ENCODE measurements at regions of chr4 and their contacts with region 1.

Region 1: DNA sequence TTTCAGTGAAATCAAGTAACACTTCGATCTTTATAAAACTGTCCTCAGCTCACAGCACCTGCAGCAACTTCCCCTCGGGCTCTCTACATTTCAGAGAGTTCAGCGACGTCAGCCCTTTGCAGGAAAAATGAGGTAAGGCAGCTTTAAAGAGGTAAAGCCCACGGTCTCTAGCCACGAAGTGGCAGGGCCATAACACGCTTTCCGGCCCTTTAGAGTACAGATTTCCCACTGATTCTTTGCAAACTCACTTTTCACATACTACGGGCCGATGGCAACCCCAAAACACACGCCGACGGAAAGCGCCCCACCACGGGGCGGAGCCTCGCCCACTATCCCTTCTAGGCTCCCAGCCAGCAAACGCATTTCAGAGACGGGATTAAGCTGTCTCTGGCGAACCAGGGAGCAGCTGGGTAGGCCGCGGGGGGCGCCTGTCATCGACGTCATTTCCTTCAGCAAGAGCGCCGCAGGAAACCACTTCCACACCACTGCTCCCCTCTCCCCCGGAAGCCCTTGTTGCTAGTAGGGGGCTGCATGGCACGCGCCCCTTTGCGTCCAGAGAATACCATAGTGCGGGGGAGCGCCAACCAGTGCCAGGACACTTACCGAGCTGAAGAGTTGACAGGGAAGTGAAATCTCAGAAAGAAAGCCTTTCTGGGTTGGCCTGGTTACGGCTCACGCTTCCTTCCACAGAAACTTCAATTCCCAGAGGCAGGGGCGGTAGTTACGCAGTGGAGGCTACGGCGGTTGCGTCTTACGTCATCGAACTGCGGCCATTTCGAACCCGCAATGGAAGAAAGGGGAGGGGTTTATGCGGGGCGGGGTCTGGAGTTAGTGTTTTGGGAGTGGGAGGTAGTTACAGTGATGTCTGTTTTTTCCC is at the start of gene TRMT10A:
- DNase-seq: peak; percentile 79 to 98 (median 98)
- ATAC-seq: peak; percentile 91
- H3K4me3 ChIP-seq: peak within 1 kb of the TSS; percentile 92
- H3K4me3 Mint-ChIP-seq: peak within 1 kb of the TSS; percentile 77 to 99 (median 98)
- H3K27ac ChIP-seq: peak within 1 kb of the TSS; percentile 91
- H3K27ac Mint-ChIP-seq: peak within 1 kb of the TSS; percentile 98 to 100 (median 100)
- H3K4me1 ChIP-seq: no peaks in the 10 kb centered on the region
- H3K4me1 Mint-ChIP-seq: peaks cover 0 to 33% (median 28%) of the 10 kb centered on the region in 7 donors
- H3K27me3 ChIP-seq: no peaks in the 10 kb centered on the region
- H3K27me3 Mint-ChIP-seq: peaks cover 13 to 29% (median 23%) of the 10 kb centered on the region in 5 donors
- total RNA-seq, gene TRMT10A: 3.9 to 9.1 (median 7.7) TPM

Region 2: DNA sequence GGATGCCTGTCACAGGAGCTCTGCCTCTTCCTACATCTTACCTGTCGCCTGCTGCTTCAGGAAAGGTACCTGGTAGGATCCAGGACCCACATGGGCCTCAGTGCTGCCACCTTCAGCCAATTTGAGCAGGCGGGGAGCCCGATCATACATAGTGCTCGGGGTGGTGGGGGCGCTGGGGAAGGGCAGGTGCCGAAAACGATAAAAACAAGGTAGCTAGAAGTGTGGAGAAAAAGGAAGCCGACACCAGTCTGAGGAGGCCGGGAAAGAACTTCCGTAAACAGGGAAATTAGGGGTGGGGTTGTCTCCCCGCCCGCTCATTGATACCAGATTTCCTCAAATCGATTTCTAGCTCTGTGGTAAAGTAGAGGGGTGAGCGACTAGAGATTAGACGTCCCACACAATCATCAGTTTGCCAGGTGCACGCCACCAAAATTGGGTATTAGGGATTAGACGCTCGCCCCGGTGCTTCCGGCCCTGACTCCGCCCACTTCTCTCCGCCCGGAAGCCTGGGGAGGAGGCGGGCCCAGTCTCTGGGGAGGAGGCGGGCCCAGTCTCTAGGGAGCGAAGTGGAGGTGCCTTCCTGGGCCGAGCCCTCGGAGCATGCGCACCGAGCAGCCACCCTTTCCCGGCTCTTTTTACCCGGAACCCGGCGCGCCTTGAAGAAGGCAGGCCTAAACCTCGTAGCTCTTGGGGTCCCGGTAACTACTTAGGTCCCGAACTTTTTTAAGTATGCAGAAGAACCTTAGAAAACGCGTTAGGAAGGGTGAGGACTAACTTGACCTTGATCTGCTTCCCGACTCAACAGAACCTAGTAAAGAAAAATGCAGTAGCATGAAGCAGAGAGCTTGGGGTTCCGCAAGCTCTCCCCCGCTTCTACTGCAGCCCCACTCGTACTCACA is 1420.3 kb before region 1 on chr4 and contains the start of gene STPG2:
- CTCF ChIA-PET with region 1: interaction called, 5 read pairs
- POLR2A ChIA-PET with region 1: interaction called, 4 read pairs
- intact Hi-C with region 1: loop called (anchors 1 kb)
- DNase-seq: peak; percentile 85 to 93 (median 91)
- ATAC-seq: peak; percentile 100
- H3K4me3 ChIP-seq: peak within 1 kb of the TSS; percentile 85
- H3K4me3 Mint-ChIP-seq: peak within 1 kb of the TSS; percentile 87 to 99 (median 94)
- H3K27ac ChIP-seq: peak within 1 kb of the TSS; percentile 84
- H3K27ac Mint-ChIP-seq: peak within 1 kb of the TSS; percentile 96 to 99 (median 98)
- H3K4me1 ChIP-seq: peaks cover 6 to 10% of the 10 kb centered on the region in 2 donors
- H3K4me1 Mint-ChIP-seq: peaks cover 12 to 28% (median 24%) of the 10 kb centered on the region in 7 donors
- H3K27me3 ChIP-seq: no peaks in the 10 kb centered on the region
- H3K27me3 Mint-ChIP-seq: peaks cover 0 to 16% (median 0%) of the 10 kb centered on the region in 5 donors
- total RNA-seq, gene STPG2: 0.19 to 0.47 (median 0.30) TPM in 4 of 5 experiments, not detected in the other

Region 3: GRCh38 chr4:99088481-99089365 is 474.8 kb before region 1 on chr4 and contains the start of gene ADH5:
- CTCF ChIA-PET with region 1: no interaction called
- POLR2A ChIA-PET with region 1: interaction called, 10 read pairs
- intact Hi-C with region 1: loop called (anchors 1 kb)
- DNase-seq: peak; percentile 75 to 90 (median 85)
- ATAC-seq: peak; percentile 98
- H3K4me3 ChIP-seq: peak within 1 kb of the TSS; percentile 98
- H3K4me3 Mint-ChIP-seq: peak within 1 kb of the TSS; percentile 93 to 99 (median 98)
- H3K27ac ChIP-seq: peak within 1 kb of the TSS; percentile 85
- H3K27ac Mint-ChIP-seq: peak within 1 kb of the TSS; percentile 94 to 99 (median 98)
- H3K4me1 ChIP-seq: peaks cover 8 to 9% of the 10 kb centered on the region in 2 donors
- H3K4me1 Mint-ChIP-seq: peaks cover 28 to 67% (median 57%) of the 10 kb centered on the region in 7 donors
- H3K27me3 ChIP-seq: no peaks in the 10 kb centered on the region
- H3K27me3 Mint-ChIP-seq: peaks cover 0 to 11% (median 0%) of the 10 kb centered on the region in 5 donors
- total RNA-seq, gene ADH5: 42.7 to 102 (median 74.0) TPM

Region 4: DNA sequence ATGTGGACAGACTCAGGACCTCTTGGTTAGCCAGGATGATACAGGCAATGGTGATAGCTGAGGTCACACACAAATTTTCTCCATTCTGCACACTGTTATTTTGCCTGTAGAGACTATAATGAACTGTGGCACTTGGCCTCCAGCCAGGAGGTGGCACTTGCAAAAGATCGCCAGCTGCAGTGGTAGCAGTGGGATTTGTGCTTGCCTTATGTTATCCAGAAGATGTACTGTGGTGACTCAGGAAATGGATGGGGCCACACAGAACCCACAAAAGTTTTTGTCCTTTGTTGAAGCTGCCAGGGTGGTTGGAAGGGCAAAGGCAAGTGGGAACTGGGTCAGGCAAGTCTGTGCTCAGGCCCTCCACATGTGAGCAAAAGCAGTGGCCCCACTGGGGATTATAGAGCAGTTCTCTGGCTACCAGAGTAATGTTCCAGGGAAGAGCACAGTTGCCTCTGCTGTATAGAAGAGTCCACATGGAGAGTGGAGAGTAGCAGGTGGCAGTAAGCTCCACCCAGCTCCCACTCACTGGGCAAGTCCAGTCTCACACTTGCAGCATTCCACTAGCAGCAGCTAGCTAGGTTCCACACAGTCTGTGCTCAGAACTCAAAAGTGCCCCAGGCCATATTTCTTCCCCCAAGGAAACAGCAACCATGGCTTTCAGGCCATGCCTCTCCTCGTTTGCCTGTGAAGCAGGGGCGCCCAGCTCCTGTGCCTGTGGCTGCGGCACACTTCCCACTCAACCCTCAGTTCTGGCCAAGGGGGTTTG is 58.6 kb before region 1 on chr4:
- CTCF ChIA-PET with region 1: no interaction called
- POLR2A ChIA-PET with region 1: interaction called, 3 read pairs
- intact Hi-C with region 1: loop called (anchors 1 kb)
- DNase-seq: no peak
- ATAC-seq: no peak
- H3K4me3 ChIP-seq: no peak overlapping the region
- H3K4me3 Mint-ChIP-seq: peak overlapping the region in 3 of 10 donors; percentile 14 to 76 (median 56)
- H3K27ac ChIP-seq: no peak overlapping the region
- H3K27ac Mint-ChIP-seq: peak overlapping the region in 8 of 9 donors; percentile 14 to 91 (median 40)
- H3K4me1 ChIP-seq: peaks cover 8 to 33% of the 10 kb centered on the region in 2 donors
- H3K4me1 Mint-ChIP-seq: peaks cover 31 to 63% (median 57%) of the 10 kb centered on the region in 7 donors
- H3K27me3 ChIP-seq: no peaks in the 10 kb centered on the region
- H3K27me3 Mint-ChIP-seq: peaks cover 0 to 2% (median 0%) of the 10 kb centered on the region in 5 donors

Region 5: DNA sequence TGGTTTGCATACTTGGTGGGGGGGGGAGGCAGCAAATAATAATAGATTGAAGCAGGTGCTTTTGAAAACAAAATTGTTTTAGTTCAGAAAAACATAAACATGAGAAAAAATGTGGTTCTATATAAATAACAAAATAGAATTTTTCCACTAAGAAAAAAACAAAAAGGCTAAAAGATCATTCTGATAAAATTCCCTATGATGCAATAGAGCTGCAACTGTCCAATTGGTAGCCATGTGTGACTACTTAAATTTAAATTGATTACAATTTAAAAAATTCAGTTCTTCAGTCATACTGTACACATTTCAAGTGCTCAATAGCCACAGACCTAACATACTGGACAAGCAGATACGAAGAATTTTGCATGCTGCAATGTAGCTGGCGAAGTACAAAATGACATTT is 10.7 kb before region 1 on chr4:
- CTCF ChIA-PET with region 1: no interaction called
- POLR2A ChIA-PET with region 1: no interaction called
- intact Hi-C with region 1: no loop called
- DNase-seq: no peak
- ATAC-seq: no peak
- H3K4me3 ChIP-seq: no peak overlapping the region
- H3K4me3 Mint-ChIP-seq: no peak overlapping the region
- H3K27ac ChIP-seq: no peak overlapping the region
- H3K27ac Mint-ChIP-seq: no peak overlapping the region
- H3K4me1 ChIP-seq: no peaks in the 10 kb centered on the region
- H3K4me1 Mint-ChIP-seq: no peaks in the 10 kb centered on the region
- H3K27me3 ChIP-seq: no peaks in the 10 kb centered on the region
- H3K27me3 Mint-ChIP-seq: no peaks in the 10 kb centered on the region

Region 6: DNA sequence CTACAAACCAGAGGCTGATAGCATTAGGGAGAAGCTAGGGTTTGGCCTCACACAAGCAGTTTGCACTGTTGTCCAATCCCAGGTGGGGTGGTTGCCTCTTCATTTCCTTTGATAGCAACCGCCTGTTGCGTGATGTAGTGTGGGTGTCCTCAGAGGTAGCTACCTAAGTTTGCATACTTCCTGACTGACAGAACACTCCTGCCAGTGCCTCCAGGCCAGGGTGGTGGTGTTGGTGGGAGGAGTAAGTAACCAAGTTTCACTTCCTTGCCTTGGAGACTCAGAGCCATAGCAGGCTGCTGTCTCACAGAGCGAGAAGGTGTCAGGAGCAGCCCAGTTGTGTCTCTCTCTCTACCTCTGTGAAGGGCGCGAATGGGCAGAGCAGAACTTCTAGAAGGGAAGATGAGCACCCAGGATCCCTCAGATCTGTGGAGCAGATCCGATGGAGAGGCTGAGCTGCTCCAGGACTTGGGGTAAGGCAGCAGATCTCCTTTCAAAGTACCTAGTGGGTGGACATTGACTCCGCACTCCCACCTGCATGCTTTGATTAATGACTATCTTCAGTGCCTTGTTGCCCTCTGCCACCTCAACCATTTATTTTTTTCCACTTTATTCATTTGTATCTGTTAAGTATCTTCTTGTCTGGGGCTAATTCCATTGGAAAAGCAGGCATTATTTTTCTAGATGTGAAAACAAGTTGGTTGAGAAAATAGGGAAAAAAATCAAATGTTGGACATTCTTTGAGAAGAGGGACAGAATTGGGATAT is 253.2 kb after region 1 on chr4 and contains the start of gene DAPP1:
- CTCF ChIA-PET with region 1: interaction called, 5 read pairs
- POLR2A ChIA-PET with region 1: interaction called, 21 read pairs
- intact Hi-C with region 1: loop called (anchors 1 kb)
- DNase-seq: peak; percentile 44 to 88 (median 84)
- ATAC-seq: peak; percentile 95
- H3K4me3 ChIP-seq: peak within 1 kb of the TSS; percentile 71
- H3K4me3 Mint-ChIP-seq: peak within 1 kb of the TSS; percentile 71 to 95 (median 92)
- H3K27ac ChIP-seq: peak within 1 kb of the TSS; percentile 77
- H3K27ac Mint-ChIP-seq: peak within 1 kb of the TSS; percentile 87 to 98 (median 96)
- H3K4me1 ChIP-seq: peaks cover 16 to 32% of the 10 kb centered on the region in 2 donors
- H3K4me1 Mint-ChIP-seq: peaks cover 41 to 72% (median 63%) of the 10 kb centered on the region in 7 donors
- H3K27me3 ChIP-seq: no peaks in the 10 kb centered on the region
- H3K27me3 Mint-ChIP-seq: no peaks in the 10 kb centered on the region
- total RNA-seq, gene DAPP1: 10.9 to 49.6 (median 20.7) TPM

Region 7: DNA sequence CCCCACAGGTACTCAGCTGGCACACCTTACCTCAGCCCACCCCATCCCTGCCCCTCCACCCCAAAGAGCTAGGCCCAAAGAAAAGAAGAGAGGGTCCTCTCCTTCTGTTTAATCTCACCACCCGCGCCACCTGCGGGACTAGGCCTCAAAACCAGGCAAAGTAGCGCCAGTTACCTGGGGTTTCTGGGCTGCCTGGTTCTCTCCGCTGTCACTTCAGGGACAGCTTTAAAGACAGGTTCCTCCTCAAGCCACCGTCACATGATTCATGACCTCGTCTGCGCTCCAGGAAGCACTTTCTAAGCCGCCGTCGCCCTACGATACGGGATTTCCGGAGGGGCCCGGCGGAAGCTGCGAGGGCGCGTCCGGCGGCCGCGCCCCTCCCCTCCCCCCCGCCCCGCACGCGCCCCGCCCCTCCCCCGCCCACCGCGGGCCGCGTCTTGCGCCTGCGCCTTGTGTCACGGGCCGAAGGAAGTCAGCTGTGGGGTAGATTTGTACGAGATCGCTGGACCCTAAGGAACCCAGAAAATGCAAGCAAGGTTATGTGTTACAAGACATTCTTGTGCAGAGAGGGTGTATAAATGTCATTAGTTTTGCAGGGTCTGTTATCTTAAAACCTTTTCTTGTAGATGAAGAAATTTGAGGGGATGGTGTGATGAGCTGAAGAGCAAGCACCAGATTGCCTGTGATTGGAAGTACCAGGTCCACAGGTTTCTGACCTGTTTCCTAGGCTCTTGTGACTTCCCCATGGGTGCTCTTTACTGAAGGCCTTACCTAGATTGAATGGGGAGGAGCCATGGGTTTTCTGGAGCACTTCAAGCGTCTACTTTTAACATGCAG is 330.8 kb after region 1 on chr4 and contains the start of gene LAMTOR3:
- CTCF ChIA-PET with region 1: no interaction called
- POLR2A ChIA-PET with region 1: interaction called, 9 read pairs
- intact Hi-C with region 1: loop called (anchors 1 kb)
- DNase-seq: peak; percentile 70 to 92 (median 89)
- ATAC-seq: peak; percentile 98
- H3K4me3 ChIP-seq: peak within 1 kb of the TSS; percentile 92
- H3K4me3 Mint-ChIP-seq: peak within 1 kb of the TSS; percentile 96 to 99 (median 98)
- H3K27ac ChIP-seq: peak within 1 kb of the TSS; percentile 96
- H3K27ac Mint-ChIP-seq: peak within 1 kb of the TSS; percentile 96 to 99 (median 98)
- H3K4me1 ChIP-seq: peaks cover 13 to 25% of the 10 kb centered on the region in 2 donors
- H3K4me1 Mint-ChIP-seq: peaks cover 25 to 55% (median 52%) of the 10 kb centered on the region in 7 donors
- H3K27me3 ChIP-seq: no peaks in the 10 kb centered on the region
- H3K27me3 Mint-ChIP-seq: no peaks in the 10 kb centered on the region
- total RNA-seq, gene LAMTOR3: 20.1 to 32.6 (median 27.4) TPM

Region 8: DNA sequence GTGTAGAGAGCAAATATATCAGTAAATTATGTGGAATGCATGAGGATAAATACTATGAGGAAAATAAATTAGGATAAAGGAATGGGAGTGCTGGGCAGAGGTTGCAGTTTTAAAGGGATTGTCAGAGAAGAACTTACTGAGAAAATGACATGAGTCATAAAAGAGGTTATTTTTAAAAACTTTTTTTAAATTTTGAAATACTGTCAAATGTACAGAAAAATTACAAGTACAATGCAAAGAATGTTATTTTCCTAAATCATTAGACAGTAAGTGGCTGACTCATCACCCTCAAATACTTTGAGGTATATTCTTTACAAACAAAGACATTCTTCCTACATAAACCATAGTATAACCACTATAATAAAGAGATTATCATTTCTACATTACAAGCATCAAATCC is 416.3 kb after region 1 on chr4:
- CTCF ChIA-PET with region 1: no interaction called
- POLR2A ChIA-PET with region 1: no interaction called
- intact Hi-C with region 1: no loop called
- DNase-seq: no peak
- ATAC-seq: no peak
- H3K4me3 ChIP-seq: no peak overlapping the region
- H3K4me3 Mint-ChIP-seq: no peak overlapping the region
- H3K27ac ChIP-seq: no peak overlapping the region
- H3K27ac Mint-ChIP-seq: no peak overlapping the region
- H3K4me1 ChIP-seq: no peaks in the 10 kb centered on the region
- H3K4me1 Mint-ChIP-seq: no peaks in the 10 kb centered on the region
- H3K27me3 ChIP-seq: no peaks in the 10 kb centered on the region
- H3K27me3 Mint-ChIP-seq: peaks cover 0 to 18% (median 14%) of the 10 kb centered on the region in 5 donors

Region 9: GRCh38 chr4:101020956-101021355 is 1457.4 kb after region 1 on chr4:
- CTCF ChIA-PET with region 1: no interaction called
- POLR2A ChIA-PET with region 1: interaction called, 9 read pairs
- intact Hi-C with region 1: loop called in 1 of 2 experiments (anchors 2 kb)
- DNase-seq: peak in 3 of 9 donors; percentile 3 to 10 (median 10)
- ATAC-seq: peak; percentile 82
- H3K4me3 ChIP-seq: peak overlapping the region; percentile 21
- H3K4me3 Mint-ChIP-seq: peak overlapping the region in 4 of 10 donors; percentile 3 to 76 (median 46)
- H3K27ac ChIP-seq: no peak overlapping the region
- H3K27ac Mint-ChIP-seq: peak overlapping the region; percentile 8 to 90 (median 59)
- H3K4me1 ChIP-seq: peaks cover 0 to 48% of the 10 kb centered on the region in 2 donors
- H3K4me1 Mint-ChIP-seq: peaks cover 21 to 55% (median 34%) of the 10 kb centered on the region in 7 donors
- H3K27me3 ChIP-seq: no peaks in the 10 kb centered on the region
- H3K27me3 Mint-ChIP-seq: no peaks in the 10 kb centered on the region

Measured in naive thymus-derived CD4-positive, alpha-beta T cell (primary cell).